AG04450 (cell line): ENCODE measurements at regions of chr6 and their contacts with region 1.

Region 1: GRCh38 chr6:130602151-130602770 is 224.9 kb upstream of the SMLR1 start:
- DNase-seq: peak; percentile 82
- H3K4me3 ChIP-seq: no peak overlapping the region
- H3K27ac ChIP-seq: peak overlapping the region; percentile 88
- H3K27me3 ChIP-seq: no peaks in the 10 kb centered on the region
- CTCF ChIP-seq: no peak

Region 2: GRCh38 chr6:130259557-130259956 is 342.7 kb before region 1 on chr6:
- CTCF ChIA-PET with region 1: no interaction called
- POLR2A ChIA-PET with region 1: no interaction called
- DNase-seq: no peak
- H3K4me3 ChIP-seq: no peak overlapping the region
- H3K27ac ChIP-seq: no peak overlapping the region
- H3K27me3 ChIP-seq: no peaks in the 10 kb centered on the region
- CTCF ChIP-seq: no peak

Region 3: DNA sequence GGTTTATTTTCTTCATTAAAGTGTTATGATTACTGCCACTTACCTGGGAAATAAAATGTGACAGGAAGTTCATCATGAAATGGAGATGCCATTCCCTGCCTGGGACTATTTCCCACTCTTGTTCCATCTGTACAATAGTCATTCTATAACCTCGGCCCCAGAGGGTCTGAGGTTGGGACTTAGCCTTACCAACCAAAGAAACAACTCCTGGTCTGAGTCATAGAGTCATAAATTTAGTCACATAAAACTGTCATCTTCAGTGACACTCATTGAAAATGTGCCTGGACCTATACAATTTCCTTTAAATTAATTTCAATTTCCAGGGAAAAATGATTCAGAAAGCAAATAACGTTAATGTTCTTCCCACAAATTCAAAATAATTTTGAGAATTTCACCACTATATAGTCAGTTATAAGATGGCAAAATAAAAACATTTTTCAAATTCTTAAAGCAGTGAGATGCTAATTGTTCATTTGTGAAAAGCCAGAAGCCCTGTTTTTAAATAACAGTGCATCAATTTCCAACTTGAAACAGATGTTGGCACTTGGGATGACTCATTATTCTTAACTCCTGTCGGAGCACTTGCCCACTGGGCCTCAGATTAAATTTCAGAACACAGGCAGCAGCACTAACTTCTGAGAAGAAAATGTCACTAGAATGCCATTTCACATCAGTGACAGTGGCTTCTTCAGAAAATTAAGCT is 23.7 kb after region 1 on chr6:
- CTCF ChIA-PET with region 1: no interaction called
- POLR2A ChIA-PET with region 1: interaction called, 13 read pairs
- DNase-seq: no peak
- H3K4me3 ChIP-seq: no peak overlapping the region
- H3K27ac ChIP-seq: no peak overlapping the region
- H3K27me3 ChIP-seq: no peaks in the 10 kb centered on the region
- CTCF ChIP-seq: no peak